Activated T-helper 1 cell treated with anti-CD3 and anti-CD28 coated beads, Interleukin-12 subunit alpha, Interleukin-12 subunit beta, Interleukin-2, Interleukin-4 antibody, amounts not matched to agents 30 ng/mL and 10 ng/mL and 1 ng/mL, durations not matched to agents 14 hours and 24 hours and 36 hours (primary cell): ENCODE measurements at regions of chr22 and their contacts with region 1.

Region 1: DNA sequence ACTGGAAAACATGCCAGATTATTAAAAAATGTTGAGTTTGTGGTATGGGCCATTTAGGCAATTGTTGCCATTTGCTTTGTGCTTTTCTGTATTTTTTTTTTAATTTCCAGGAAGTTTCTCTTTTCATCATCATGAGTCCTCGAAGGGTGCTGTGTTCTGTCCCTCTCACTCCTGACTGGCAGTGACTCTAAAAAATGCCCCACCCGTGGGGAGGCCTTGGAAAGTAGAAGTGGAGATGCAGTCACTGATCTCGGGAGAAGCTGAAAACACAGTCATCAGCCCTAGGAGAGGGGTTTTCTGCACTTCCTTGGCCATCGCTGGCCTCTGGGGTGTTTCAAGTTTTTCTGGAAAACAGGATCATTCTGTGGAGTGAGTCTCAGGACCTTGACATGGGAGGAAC is 98.5 kb upstream of the GRK3 start:
- DNase-seq: no peak
- H3K4me3 Mint-ChIP-seq: no peak overlapping the region
- H3K27ac Mint-ChIP-seq: peak overlapping the region; percentile 25
- H3K4me1 Mint-ChIP-seq: peaks cover 19% of the 10 kb centered on the region
- H3K27me3 Mint-ChIP-seq: no peaks in the 10 kb centered on the region

Region 2: DNA sequence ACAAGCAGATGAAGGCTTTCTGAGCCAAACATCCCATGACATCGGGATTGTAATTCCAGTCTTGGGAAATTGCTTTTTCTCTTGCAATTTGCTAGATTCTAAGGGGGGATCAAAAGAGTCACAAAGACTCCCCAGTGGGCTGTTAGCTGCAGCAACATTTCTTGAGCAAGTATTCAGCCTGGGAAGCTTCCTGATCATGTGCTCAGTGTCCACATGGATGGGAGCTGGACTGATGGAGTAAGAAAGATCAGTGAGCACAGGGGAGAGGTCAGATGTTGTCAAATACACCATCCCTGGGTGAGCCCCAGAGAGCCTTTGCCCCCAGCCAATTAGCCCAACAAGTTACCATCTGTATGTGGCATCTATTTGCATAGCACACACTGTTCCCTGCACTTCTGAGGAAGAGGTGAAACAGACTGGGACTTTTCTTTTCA is 88.3 kb after region 1 on chr22:
- intact Hi-C with region 1: no loop called
- DNase-seq: no peak
- H3K4me3 Mint-ChIP-seq: no peak overlapping the region
- H3K27ac Mint-ChIP-seq: no peak overlapping the region
- H3K4me1 Mint-ChIP-seq: no peaks in the 10 kb centered on the region
- H3K27me3 Mint-ChIP-seq: peaks cover 2% of the 10 kb centered on the region

Region 3: DNA sequence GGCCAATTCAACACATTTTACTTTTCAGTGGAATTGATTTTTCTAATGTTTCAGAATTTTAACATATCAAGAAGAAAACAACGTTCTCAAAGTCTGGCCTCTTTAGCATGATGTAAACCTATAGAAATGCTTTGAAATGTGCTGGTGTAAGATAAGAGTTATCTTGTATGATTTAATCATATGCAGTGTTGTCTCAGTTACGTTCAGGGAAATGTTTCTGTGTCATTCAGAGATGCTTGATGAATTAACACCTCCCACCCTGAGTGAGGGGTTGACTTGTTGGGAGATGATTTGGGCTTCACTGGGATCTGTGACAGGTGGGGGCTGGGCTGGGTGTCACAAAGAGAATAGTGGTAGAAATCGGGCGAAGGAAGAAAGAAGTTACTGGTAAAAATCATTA is 260.3 kb after region 1 on chr22:
- intact Hi-C with region 1: loop called (anchors 1 kb)
- DNase-seq: no peak
- H3K4me3 Mint-ChIP-seq: no peak overlapping the region
- H3K27ac Mint-ChIP-seq: peak overlapping the region; percentile 90
- H3K4me1 Mint-ChIP-seq: peaks cover 41% of the 10 kb centered on the region
- H3K27me3 Mint-ChIP-seq: no peaks in the 10 kb centered on the region

Region 4: GRCh38 chr22:25777870-25778269 is 311.9 kb after region 1 on chr22:
- intact Hi-C with region 1: loop called (anchors 1 kb)
- DNase-seq: peak; percentile 8
- H3K4me3 Mint-ChIP-seq: no peak overlapping the region
- H3K27ac Mint-ChIP-seq: no peak overlapping the region
- H3K4me1 Mint-ChIP-seq: peaks cover 4% of the 10 kb centered on the region
- H3K27me3 Mint-ChIP-seq: no peaks in the 10 kb centered on the region